ENCODE measurements at regions of chr12 and their contacts with region 1.

Region 1: GRCh38 chr12:54207484-54208294 is 18.9 kb upstream of the SMUG1 start:
- DNase-seq: peak; percentile 81
- H3K4me3 ChIP-seq: no peak overlapping the region
- H3K27ac ChIP-seq: no peak overlapping the region; a peak in 1 of 4 replicates
- H3K4me1 ChIP-seq: peaks cover 0 to 15% of the 10 kb centered on the region in 2 experiments; a peak in 1 of 4 replicates
- H3K27me3 ChIP-seq: peaks cover 16% of the 10 kb centered on the region; the same call in 1 of the 2 replicates
- CTCF ChIP-seq: peak; percentile 90
- EP300 ChIP-seq: no peak
- RAD21 ChIP-seq: peak; percentile 86

Region 2: DNA sequence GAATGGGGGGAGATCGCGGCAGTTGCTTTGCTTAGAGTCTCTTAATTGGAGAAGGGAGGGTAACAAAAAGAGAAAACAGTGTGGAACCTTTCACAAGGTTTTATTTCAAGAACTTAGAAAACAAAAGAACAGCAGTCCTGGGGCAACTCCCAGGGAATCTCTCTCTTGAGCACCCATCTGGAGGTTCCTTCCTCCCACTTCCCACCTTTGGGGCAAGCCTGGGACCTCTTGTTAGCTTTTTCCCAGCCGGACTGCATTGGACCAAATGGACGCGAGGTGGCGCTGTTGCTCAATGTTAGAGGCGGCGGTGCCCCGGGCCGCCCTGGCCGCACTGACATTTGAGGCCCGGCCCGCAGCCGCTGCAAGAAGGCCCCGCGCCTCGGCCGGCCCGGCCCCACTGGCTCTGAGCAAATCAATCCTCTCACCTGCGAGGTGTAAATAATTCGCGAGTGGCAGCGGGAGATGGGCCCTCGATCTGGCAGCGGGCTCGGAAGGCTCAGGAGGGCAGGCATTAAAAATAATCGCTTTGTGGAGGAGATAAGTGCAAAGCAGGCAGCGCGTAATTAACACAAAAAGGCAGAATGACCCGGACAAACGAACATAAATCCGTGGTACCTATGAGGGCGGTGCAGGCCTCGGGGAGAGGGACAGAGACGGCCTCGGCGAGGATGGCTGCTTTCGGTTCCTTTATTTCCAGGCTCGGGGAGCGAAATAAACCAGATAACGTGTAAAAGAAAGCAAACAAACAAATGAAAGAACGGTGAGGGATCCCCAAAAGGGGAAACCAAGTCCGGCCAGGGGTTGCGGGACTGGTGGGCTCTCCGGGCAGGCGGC is 201.6 kb before region 1 on chr12:
- CTCF ChIA-PET with region 1: interaction called, 568 read pairs
- POLR2A ChIA-PET with region 1: interaction called, 3 read pairs
- DNase-seq: peak; percentile 93
- H3K4me3 ChIP-seq: no peak overlapping the region
- H3K27ac ChIP-seq: no peak overlapping the region
- H3K4me1 ChIP-seq: peaks cover 0 to 23% of the 10 kb centered on the region in 2 experiments; a peak in 1 of 4 replicates
- H3K27me3 ChIP-seq: no peaks in the 10 kb centered on the region
- CTCF ChIP-seq: peak; percentile 89
- EP300 ChIP-seq: no peak
- RAD21 ChIP-seq: peak; percentile 94

Region 3: GRCh38 chr12:54134850-54135249 is 72.8 kb before region 1 on chr12:
- CTCF ChIA-PET with region 1: interaction called, 28 read pairs
- POLR2A ChIA-PET with region 1: no interaction called
- DNase-seq: peak; percentile 45
- H3K4me3 ChIP-seq: no peak overlapping the region
- H3K27ac ChIP-seq: peak overlapping the region in 1 of 2 experiments; percentile 67; a peak in 2 of 4 replicates
- H3K4me1 ChIP-seq: peaks cover 0 to 47% of the 10 kb centered on the region in 2 experiments; a peak in 2 of 4 replicates
- H3K27me3 ChIP-seq: no peaks in the 10 kb centered on the region
- CTCF ChIP-seq: no peak
- EP300 ChIP-seq: no peak
- RAD21 ChIP-seq: peak; percentile 76

Region 4: GRCh38 chr12:54140588-54141388 is 66.9 kb before region 1 on chr12:
- CTCF ChIA-PET with region 1: interaction called, 28 read pairs
- POLR2A ChIA-PET with region 1: no interaction called
- DNase-seq: no peak
- H3K4me3 ChIP-seq: no peak overlapping the region
- H3K27ac ChIP-seq: no peak overlapping the region
- H3K4me1 ChIP-seq: peaks cover 0 to 9% of the 10 kb centered on the region in 2 experiments; a peak in 1 of 4 replicates
- H3K27me3 ChIP-seq: no peaks in the 10 kb centered on the region
- CTCF ChIP-seq: no peak
- EP300 ChIP-seq: no peak
- RAD21 ChIP-seq: no peak

Region 5: DNA sequence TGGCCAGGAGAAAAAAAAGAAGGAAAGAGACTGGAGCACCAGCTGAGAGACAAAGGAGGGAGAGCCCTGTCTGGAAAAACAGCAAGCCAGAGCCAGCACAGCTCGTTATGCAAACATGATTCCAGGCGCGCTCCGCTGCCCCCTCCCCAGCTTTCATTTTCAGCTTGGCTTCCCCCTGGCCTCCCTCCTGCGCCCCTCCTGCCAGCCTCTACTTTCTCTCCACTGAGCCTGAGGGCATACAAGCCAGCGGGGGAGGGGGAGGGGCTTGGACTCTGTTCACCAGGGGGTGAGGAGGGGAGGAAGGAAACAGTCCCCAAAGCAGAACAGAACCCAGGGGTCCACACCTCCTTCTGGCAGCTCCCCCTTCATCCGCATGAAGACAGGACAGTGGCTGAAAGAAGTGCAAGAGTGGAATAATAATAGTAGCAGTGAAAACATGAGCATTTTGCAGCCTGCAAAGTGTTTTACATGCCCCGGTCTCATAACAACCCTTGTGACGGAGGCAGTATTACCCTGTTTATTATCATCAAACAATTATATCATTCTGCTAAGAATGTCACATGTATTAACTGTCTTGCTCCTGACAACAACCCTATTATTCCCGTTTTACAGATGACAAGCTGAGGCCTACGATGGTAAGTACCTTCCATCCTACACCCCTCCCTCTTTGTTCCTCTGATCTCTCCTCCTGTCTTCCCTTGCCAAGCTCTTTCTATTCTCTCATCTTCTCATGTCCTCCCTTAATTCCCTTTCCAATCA is 43.1 kb before region 1 on chr12:
- CTCF ChIA-PET with region 1: interaction called, 11 read pairs
- POLR2A ChIA-PET with region 1: no interaction called
- DNase-seq: peak; percentile 61
- H3K4me3 ChIP-seq: no peak overlapping the region
- H3K27ac ChIP-seq: no peak overlapping the region
- H3K4me1 ChIP-seq: peaks cover 0 to 27% of the 10 kb centered on the region in 2 experiments; a peak in 1 of 4 replicates
- H3K27me3 ChIP-seq: no peaks in the 10 kb centered on the region
- CTCF ChIP-seq: no peak
- EP300 ChIP-seq: no peak
- RAD21 ChIP-seq: no peak

Region 6: GRCh38 chr12:54191550-54192022 is 16.1 kb before region 1 on chr12:
- CTCF ChIA-PET with region 1: interaction called, 92 read pairs
- POLR2A ChIA-PET with region 1: no interaction called
- DNase-seq: peak; percentile 83
- H3K4me3 ChIP-seq: peak overlapping the region in 1 of 2 experiments; percentile 46; a peak in 1 of 4 replicates
- H3K27ac ChIP-seq: no peak overlapping the region
- H3K4me1 ChIP-seq: peaks cover 17 to 50% of the 10 kb centered on the region in 2 experiments; a peak in 3 of 4 replicates
- H3K27me3 ChIP-seq: no peaks in the 10 kb centered on the region
- CTCF ChIP-seq: peak; percentile 82
- EP300 ChIP-seq: no peak
- RAD21 ChIP-seq: peak; percentile 94